PC-9 (cell line): ENCODE measurements at regions of chr2 and their contacts with region 1.

Region 1: GRCh38 chr2:216498418-216499413 is at the start of gene RPL37A:
- DNase-seq: peak; percentile 86 to 88
- H3K4me3 ChIP-seq: peak within 1 kb of the TSS; percentile 96
- H3K27ac ChIP-seq: peak within 1 kb of the TSS; percentile 86
- H3K4me1 ChIP-seq: peaks cover 30% of the 10 kb centered on the region
- H3K27me3 ChIP-seq: no peaks in the 10 kb centered on the region
- CTCF ChIP-seq: no peak
- total RNA-seq, gene RPL37A: 2,248 and 2,378 TPM in 2 replicates

Region 2: DNA sequence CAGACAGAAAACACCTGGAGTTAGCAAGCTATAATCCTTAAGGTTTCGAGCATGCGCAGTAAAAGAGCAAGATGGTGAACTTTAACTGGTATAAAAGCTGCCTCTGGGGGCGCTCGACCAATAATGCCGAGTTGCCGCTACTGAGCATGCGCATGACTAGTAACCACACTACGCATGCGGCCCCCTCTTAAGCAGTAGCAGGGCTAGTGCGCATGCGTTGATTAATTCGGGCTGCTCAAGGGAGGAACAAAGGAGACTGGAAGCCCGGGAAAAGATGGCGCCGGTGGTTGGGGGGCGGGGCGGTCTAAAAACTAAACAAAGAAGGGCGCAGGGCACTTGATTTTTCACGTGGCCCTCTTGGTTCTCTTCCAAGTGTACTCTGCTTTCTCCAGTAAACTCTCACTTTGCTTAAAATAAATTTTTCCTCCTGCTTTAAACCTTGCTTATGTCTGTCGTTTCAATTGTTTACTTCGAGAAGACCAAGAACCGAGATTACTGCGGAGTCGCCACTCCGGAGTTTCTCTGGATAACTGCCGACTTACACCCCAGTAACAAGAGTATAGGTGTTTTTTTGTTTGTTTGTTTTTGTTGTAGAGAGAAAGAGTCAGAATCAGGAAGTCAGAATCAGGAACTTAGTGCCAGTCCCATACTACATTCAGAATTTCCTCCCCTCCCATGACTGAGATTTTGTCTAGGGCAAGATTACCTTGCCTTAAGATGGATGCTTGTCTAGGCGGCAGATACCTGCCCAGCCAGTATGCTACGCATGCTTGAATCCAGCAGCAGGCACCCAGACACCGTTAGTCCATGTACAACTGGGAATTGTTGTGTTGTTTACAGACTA is 383.8 kb before region 1 on chr2:
- CTCF ChIA-PET with region 1: no interaction called
- POLR2A ChIA-PET with region 1: interaction called, 3 read pairs
- intact Hi-C with region 1: loop called (anchors 5 kb)
- DNase-seq: peak; percentile 96 to 98
- H3K4me3 ChIP-seq: peak overlapping the region; percentile 76
- H3K27ac ChIP-seq: peak overlapping the region; percentile 81
- H3K4me1 ChIP-seq: peaks cover 19% of the 10 kb centered on the region
- H3K27me3 ChIP-seq: no peaks in the 10 kb centered on the region
- CTCF ChIP-seq: peak; percentile 99

Region 3: GRCh38 chr2:216215658-216216390 is 282.9 kb before region 1 on chr2:
- CTCF ChIA-PET with region 1: no interaction called
- POLR2A ChIA-PET with region 1: no interaction called
- intact Hi-C with region 1: loop called (anchors 10 kb)
- DNase-seq: no peak
- H3K4me3 ChIP-seq: no peak overlapping the region
- H3K27ac ChIP-seq: peak overlapping the region; percentile 38; the same call in 1 of the 2 replicates
- H3K4me1 ChIP-seq: peaks cover 57% of the 10 kb centered on the region
- H3K27me3 ChIP-seq: no peaks in the 10 kb centered on the region
- CTCF ChIP-seq: peak; percentile 41

Region 4: DNA sequence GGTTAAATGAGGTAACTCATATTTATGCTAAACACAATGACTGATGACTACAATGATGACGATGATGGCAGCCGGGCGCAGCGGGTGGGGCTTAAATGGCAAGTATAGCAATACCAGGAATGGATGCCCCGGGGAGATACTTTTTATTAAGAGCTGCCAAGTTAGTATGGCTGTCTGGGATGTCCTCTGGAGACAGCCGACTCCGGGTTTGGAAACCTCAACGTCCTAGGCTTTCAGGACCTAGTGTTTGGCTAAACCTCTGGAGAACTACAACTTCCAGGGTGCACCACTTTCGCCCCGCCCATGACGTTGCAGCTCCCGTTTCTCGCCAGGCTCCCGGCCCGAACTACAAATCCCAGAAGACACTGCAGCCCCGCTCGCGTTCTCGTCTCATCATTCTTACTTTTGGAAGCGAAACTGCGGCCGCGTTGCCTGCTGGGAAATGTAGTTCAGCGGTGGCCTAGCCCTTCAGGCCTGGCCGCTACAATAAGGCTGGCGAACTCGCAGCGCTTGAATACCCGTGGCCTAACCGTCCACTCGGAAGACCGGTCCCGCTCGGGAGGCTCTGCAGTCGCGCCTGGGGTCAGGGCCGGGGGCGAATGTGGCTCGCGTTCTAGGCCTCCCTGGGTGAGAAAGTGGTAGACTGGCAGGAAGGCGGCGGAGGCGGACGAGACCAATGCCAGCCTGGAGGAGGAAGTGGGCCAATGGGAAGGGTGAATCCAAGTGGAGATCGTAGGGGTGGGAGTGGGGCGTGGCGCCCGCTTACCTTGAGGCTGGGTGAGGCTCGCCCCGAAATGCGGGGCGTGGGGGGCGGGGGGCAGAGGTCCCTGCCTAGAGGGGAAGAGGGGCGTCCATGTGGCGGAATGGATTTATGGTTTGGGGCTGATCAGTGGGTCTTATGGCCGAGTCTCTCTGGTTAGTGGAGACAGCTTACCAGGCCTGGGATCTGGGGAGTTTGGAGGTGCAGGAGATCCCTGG is 86.4 kb before region 1 on chr2 and contains the start of gene SMARCAL1:
- CTCF ChIA-PET with region 1: no interaction called
- POLR2A ChIA-PET with region 1: no interaction called
- intact Hi-C with region 1: loop called (anchors 1 kb)
- DNase-seq: peak; percentile 93 to 97
- H3K4me3 ChIP-seq: peak within 1 kb of the TSS; percentile 81
- H3K27ac ChIP-seq: peak within 1 kb of the TSS; percentile 57
- H3K4me1 ChIP-seq: 0 out of 2 replicates have a peak, but pooled peaks cover 11% of the 10 kb centered on the region
- H3K27me3 ChIP-seq: no peaks in the 10 kb centered on the region
- CTCF ChIP-seq: no peak
- total RNA-seq, gene SMARCAL1: 39.7 and 40.5 TPM in 2 replicates

Region 5: DNA sequence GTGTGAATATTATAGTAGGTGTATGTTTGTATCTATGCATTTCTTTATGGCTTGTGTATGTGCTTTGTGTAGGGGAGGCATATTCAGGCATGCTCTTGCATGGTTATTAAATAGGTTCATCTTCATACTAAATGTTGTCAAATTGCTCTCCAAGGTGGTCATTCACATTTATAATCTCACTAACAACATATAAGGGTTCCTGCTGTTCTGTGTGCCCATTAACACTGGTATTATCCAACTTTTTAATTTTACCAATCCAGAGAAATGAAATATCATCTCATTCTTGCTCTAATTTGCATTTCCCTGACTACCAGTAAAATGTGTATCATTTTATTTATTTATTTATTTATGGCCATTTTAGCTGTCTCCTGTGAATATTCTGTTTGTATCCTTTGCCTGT is 29.1 kb before region 1 on chr2:
- CTCF ChIA-PET with region 1: no interaction called
- POLR2A ChIA-PET with region 1: interaction called, 18 read pairs
- intact Hi-C with region 1: no loop called
- DNase-seq: no peak
- H3K4me3 ChIP-seq: no peak overlapping the region
- H3K27ac ChIP-seq: no peak overlapping the region
- H3K4me1 ChIP-seq: no peaks in the 10 kb centered on the region
- H3K27me3 ChIP-seq: no peaks in the 10 kb centered on the region
- CTCF ChIP-seq: no peak

Region 6: GRCh38 chr2:216486708-216487107 is 12.0 kb before region 1 on chr2:
- CTCF ChIA-PET with region 1: no interaction called
- POLR2A ChIA-PET with region 1: interaction called, 10 read pairs
- intact Hi-C with region 1: no loop called
- DNase-seq: no peak
- H3K4me3 ChIP-seq: no peak overlapping the region
- H3K27ac ChIP-seq: no peak overlapping the region
- H3K4me1 ChIP-seq: peaks cover 12% of the 10 kb centered on the region
- H3K27me3 ChIP-seq: no peaks in the 10 kb centered on the region
- CTCF ChIP-seq: no peak

Region 7: GRCh38 chr2:216687646-216688045 is 188.9 kb after region 1 on chr2:
- CTCF ChIA-PET with region 1: no interaction called
- POLR2A ChIA-PET with region 1: interaction called, 22 read pairs
- intact Hi-C with region 1: no loop called
- DNase-seq: no peak
- H3K4me3 ChIP-seq: no peak overlapping the region
- H3K27ac ChIP-seq: no peak overlapping the region
- H3K4me1 ChIP-seq: peaks cover 5% of the 10 kb centered on the region; the same call in 1 of the 2 replicates
- H3K27me3 ChIP-seq: no peaks in the 10 kb centered on the region
- CTCF ChIP-seq: no peak; the same call in 1 of the 2 replicates